GM12878 (cell line): ENCODE measurements at regions of chr21 and their contacts with region 1.

Region 1: GRCh38 chr21:29298348-29299045 is at the start of gene BACH1:
- DNase-seq: no peak
- ATAC-seq: peak; percentile 61
- H3K4me3 ChIP-seq: peak within 1 kb of the TSS; percentile 93
- H3K27ac ChIP-seq: peak within 1 kb of the TSS; percentile 96
- H3K4me1 ChIP-seq: peaks cover 31% of the 10 kb centered on the region
- H3K27me3 ChIP-seq: no peaks in the 10 kb centered on the region
- CTCF ChIP-seq: peak; percentile 32 to 59 (median 41); a peak in 5 of 6 replicates
- EP300 ChIP-seq: no peak
- POLR2A ChIP-seq: peak; percentile 98
- RAD21 ChIP-seq: peak; percentile 59
- polyA plus RNA-seq, gene BACH1: 3.2 to 3.3 TPM

Region 2: DNA sequence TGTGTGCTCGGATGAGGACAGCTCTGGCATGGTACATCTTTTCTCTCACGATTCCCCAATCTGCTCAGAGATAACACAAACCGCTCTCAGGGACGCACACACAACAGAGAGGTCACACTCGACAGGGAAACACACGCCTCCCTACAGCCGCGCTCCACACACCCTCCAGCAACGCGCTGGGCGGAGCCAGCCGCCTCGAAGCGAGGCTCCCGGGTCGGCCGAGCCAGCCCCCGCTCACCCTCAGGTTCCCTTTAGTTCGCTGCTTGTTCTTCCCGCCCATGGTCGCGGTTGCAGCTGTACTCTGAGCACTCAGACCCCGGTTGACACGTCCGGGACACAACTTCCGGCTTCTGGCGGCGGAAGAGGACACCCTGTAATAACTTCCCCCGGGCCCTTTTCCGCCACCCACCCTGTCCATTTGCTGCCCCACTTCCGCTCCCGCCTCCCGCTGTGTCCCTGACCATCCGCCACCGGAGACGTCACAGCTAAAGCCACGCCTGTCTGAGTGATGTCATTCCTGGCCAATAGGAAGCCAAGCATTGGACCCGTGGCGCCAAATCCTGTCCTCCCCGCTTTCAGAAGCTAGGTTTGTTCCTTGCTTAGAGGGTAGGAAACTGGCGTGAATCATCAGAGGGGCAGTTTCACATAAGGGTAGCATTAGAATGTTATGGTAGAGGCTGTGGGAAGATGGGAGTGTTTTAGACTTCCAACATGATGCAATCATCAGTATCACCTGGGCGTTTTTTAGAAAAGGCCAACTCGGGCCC is 305.8 kb before region 1 on chr21 and contains the start of gene LTN1:
- CTCF ChIA-PET with region 1: no interaction called
- POLR2A ChIA-PET with region 1: interaction called, 5 read pairs
- RAD21 ChIA-PET with region 1: no interaction called
- SMC1A ChIA-PET with region 1: no interaction called
- in situ Hi-C with region 1: no loop called
- intact Hi-C with region 1: loop called (anchors 10 kb)
- DNase-seq: peak; percentile 99
- ATAC-seq: peak; percentile 95
- H3K4me3 ChIP-seq: peak within 1 kb of the TSS; percentile 97
- H3K27ac ChIP-seq: peak within 1 kb of the TSS; percentile 73
- H3K4me1 ChIP-seq: peaks cover 3% of the 10 kb centered on the region
- H3K27me3 ChIP-seq: no peaks in the 10 kb centered on the region
- CTCF ChIP-seq: no peak
- EP300 ChIP-seq: peak in 1 of 2 experiments; percentile 28; a peak in 1 of 4 replicates
- POLR2A ChIP-seq: peak; percentile 86
- RAD21 ChIP-seq: 0 out of 2 replicates have a peak, but pooled peaks have one; percentile 4
- polyA plus RNA-seq, gene LTN1: 3.5 to 10.1 TPM

Region 3: GRCh38 chr21:29091032-29091431 is 207.5 kb before region 1 on chr21:
- CTCF ChIA-PET with region 1: interaction called, 5 read pairs
- POLR2A ChIA-PET with region 1: no interaction called
- RAD21 ChIA-PET with region 1: interaction called, 19 read pairs
- SMC1A ChIA-PET with region 1: interaction called, 11 read pairs
- in situ Hi-C with region 1: no loop called
- intact Hi-C with region 1: no loop called
- DNase-seq: no peak
- ATAC-seq: no peak
- H3K4me3 ChIP-seq: no peak overlapping the region
- H3K27ac ChIP-seq: no peak overlapping the region
- H3K4me1 ChIP-seq: no peaks in the 10 kb centered on the region
- H3K27me3 ChIP-seq: no peaks in the 10 kb centered on the region
- CTCF ChIP-seq: no peak
- EP300 ChIP-seq: no peak
- POLR2A ChIP-seq: no peak
- RAD21 ChIP-seq: no peak

Region 4: DNA sequence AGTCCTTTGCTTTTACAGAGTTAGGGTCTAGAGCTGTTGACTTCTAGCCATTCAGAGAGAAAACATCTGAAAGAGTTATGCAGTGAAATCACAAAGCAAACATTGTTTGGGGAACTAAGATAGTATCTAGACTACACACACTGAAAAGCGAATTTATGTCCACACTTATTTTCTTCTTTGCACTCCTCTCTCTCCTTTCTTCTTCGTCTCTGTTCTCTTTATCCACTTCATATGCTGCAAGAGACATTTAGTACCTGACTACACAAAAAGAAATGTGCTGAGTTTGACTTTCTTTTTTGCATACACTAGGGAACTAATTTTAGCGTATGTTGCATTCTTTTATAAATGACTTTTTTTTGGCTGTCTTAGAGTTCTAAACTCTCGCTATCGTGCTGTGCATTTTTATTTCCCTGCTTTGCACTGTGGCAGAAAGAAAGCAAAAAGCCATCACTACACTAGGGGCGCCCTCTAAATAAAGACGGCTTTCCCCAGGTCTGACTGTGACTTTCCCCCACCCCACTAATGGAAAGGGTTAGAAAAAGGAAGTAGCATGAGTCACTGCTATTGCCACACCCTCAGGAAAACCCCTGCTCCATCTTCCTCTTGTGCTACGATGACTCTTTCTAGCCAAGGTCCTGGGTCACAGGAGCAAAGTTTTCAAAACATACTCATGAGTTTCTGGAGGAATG is 102.4 kb before region 1 on chr21:
- CTCF ChIA-PET with region 1: interaction called, 6 read pairs
- POLR2A ChIA-PET with region 1: interaction called, 12 read pairs
- RAD21 ChIA-PET with region 1: interaction called, 9 read pairs
- SMC1A ChIA-PET with region 1: interaction called, 7 read pairs
- in situ Hi-C with region 1: no loop called
- intact Hi-C with region 1: loop called (anchors 1 kb)
- DNase-seq: peak; percentile 90
- ATAC-seq: peak; percentile 99
- H3K4me3 ChIP-seq: peak overlapping the region; percentile 51; the same call in 1 of the 2 replicates
- H3K27ac ChIP-seq: peak overlapping the region; percentile 80
- H3K4me1 ChIP-seq: peaks cover 13% of the 10 kb centered on the region
- H3K27me3 ChIP-seq: no peaks in the 10 kb centered on the region
- CTCF ChIP-seq: peak; percentile 49 to 67 (median 62)
- EP300 ChIP-seq: peak; percentile 61 to 74; a peak in 2 of 4 replicates
- POLR2A ChIP-seq: 0 out of 2 replicates have a peak, but pooled peaks have one; percentile 37
- RAD21 ChIP-seq: peak; percentile 55

Region 5: GRCh38 chr21:29232601-29233546 is 65.6 kb before region 1 on chr21:
- CTCF ChIA-PET with region 1: interaction called, 157 read pairs
- POLR2A ChIA-PET with region 1: interaction called, 82 read pairs
- RAD21 ChIA-PET with region 1: interaction called, 257 read pairs
- SMC1A ChIA-PET with region 1: interaction called, 297 read pairs
- in situ Hi-C with region 1: loop called (anchors 5 kb)
- intact Hi-C with region 1: loop called (anchors 1 kb)
- DNase-seq: no peak
- ATAC-seq: peak; percentile 42
- H3K4me3 ChIP-seq: 0 out of 2 replicates have a peak overlapping the region, but pooled peaks have one; percentile 2
- H3K27ac ChIP-seq: peak overlapping the region; percentile 87
- H3K4me1 ChIP-seq: peaks cover 69% of the 10 kb centered on the region
- H3K27me3 ChIP-seq: no peaks in the 10 kb centered on the region
- CTCF ChIP-seq: peak; percentile 16 to 43 (median 30); a peak in 3 of 6 replicates
- EP300 ChIP-seq: no peak
- POLR2A ChIP-seq: no peak
- RAD21 ChIP-seq: peak; percentile 68

Region 6: DNA sequence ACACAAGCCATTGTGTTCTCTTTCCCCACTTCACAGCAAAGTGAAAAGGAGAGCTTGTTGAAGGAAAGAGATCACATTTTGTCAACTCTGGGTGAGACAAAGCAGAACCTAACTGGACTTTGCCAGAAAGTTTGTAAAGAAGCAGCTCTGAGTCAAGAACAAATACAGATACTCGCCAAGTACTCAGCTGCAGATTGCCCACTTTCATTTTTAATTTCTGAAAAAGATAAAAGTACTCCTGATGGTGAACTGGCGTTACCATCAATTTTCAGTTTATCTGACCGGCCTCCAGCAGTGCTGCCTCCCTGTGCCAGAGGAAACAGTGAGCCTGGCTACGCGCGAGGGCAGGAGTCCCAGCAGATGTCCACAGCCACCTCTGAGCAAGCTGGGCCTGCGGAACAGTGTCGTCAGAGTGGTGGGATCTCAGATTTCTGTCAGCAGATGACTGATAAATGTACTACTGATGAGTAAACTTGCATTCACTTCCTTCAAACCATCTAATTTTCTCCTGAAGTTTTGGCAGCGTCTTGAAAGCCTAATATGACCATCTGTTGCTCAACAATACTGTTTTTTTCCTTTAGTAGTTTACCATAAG is 44.0 kb after region 1 on chr21:
- CTCF ChIA-PET with region 1: interaction called, 4 read pairs
- POLR2A ChIA-PET with region 1: interaction called, 10 read pairs
- RAD21 ChIA-PET with region 1: interaction called, 5 read pairs
- SMC1A ChIA-PET with region 1: interaction called, 35 read pairs
- in situ Hi-C with region 1: no loop called
- intact Hi-C with region 1: no loop called
- DNase-seq: peak; percentile 32
- ATAC-seq: peak; percentile 66
- H3K4me3 ChIP-seq: peak overlapping the region; percentile 31; the same call in 1 of the 2 replicates
- H3K27ac ChIP-seq: peak overlapping the region; percentile 24
- H3K4me1 ChIP-seq: peaks cover 13% of the 10 kb centered on the region
- H3K27me3 ChIP-seq: no peaks in the 10 kb centered on the region
- CTCF ChIP-seq: no peak
- EP300 ChIP-seq: peak in 1 of 2 experiments; percentile 38; a peak in 2 of 4 replicates
- POLR2A ChIP-seq: 0 out of 2 replicates have a peak, but pooled peaks have one; percentile 40
- RAD21 ChIP-seq: no peak

Region 7: GRCh38 chr21:29626801-29627470 is 328.4 kb after region 1 on chr21:
- CTCF ChIA-PET with region 1: no interaction called
- POLR2A ChIA-PET with region 1: no interaction called
- RAD21 ChIA-PET with region 1: no interaction called
- SMC1A ChIA-PET with region 1: no interaction called
- in situ Hi-C with region 1: no loop called
- intact Hi-C with region 1: no loop called
- DNase-seq: no peak
- ATAC-seq: no peak
- H3K4me3 ChIP-seq: no peak overlapping the region
- H3K27ac ChIP-seq: no peak overlapping the region
- H3K4me1 ChIP-seq: no peaks in the 10 kb centered on the region
- H3K27me3 ChIP-seq: no peaks in the 10 kb centered on the region
- CTCF ChIP-seq: no peak
- EP300 ChIP-seq: no peak
- POLR2A ChIP-seq: no peak
- RAD21 ChIP-seq: no peak